ENCODE measurements at regions of chr1 and their contacts with region 1.

Region 1: DNA sequence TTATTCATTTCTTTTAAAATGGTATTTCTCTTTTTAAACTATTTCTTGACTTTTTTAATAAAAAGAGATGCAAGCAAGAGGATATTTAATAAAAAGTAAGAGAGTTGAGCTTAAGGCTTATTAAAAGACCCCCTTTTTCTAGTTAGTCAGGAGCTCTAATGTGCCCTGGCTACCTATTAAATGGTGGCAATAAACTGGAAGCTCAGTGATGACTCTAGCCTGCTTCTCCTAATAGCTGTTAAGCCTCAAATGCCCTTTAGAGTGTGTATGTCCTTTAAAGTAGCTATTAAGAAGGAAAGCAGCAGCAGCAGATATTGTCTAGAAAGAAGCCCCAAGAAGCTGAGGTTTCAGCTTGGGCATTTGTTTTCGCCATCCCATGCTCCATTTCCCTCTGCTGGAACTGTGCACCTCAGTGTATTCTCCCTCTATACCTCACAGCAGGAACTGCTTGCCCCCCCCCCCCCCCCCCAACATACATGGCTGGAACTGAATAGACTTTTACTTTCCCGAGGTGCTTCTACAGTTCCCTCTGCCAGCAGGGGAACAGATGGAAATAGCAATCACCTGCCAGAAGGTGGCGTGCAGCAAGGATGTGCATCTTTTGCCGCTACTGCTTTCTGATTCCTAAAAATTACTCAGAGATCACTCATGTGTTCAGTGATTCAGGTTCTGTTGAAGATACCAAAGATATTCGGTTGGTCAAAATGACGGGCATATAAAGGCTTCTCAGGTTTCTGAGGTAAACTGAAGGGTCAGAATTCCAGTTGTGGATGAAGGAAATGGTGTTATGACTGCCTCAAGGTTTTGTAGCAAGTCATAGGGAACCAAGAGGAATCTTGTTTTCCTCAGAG is 2.5 kb downstream of the RGS4 start:
- DNase-seq: peak; percentile 68
- ATAC-seq: peak; percentile 61

Region 2: GRCh38 chr1:162878000-162878596 is 193.5 kb before region 1 on chr1:
- intact Hi-C with region 1: loop called (anchors 10 kb)
- DNase-seq: no peak
- ATAC-seq: peak; percentile 70

Region 3: GRCh38 chr1:163006051-163006834 is 65.4 kb before region 1 on chr1:
- intact Hi-C with region 1: no loop called
- DNase-seq: no peak
- ATAC-seq: no peak

Region 4: DNA sequence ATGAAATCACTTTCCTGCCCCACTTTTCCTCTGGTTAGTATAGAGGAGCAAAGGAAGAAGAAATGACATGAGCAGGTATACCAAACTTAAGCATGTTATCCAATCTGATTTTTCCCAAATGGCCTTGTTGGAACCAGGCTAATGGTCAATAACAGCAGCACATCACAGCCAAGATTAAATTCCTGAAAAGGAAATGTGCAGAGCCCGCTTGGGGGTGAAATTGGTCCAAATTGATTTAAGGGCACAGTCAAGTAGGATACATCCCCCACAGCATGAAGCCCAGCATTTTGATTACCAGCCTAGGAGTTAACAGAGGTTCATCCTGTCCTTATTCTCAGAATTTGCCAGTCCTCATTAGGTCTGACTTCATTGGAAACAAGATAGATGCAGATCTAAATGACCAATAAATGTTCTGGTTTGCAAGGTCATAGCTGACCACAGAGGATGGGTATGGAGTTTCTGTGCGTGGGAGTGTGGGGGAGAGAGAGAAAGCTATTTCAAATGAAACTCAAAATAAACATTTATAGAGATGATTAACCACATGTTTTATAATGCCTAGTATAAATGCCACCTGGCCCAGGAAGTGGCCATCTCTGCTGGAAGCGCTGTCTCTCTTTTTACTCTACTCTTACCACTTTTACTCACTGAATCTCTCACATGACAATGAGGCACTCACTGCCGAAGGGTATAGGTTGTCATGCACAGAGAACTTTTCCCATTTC is 92.4 kb after region 1 on chr1:
- intact Hi-C with region 1: no loop called
- DNase-seq: no peak
- ATAC-seq: no peak

Measured in left ventricle myocardium superior (tissue), 1 donor.